K562 (cell line): ENCODE measurements at regions of chr4 and their contacts with region 1.

Region 1: GRCh38 chr4:139665690-139666529 is at the start of gene MGST2:
- DNase-seq: peak; percentile 67 to 91 (median 80)
- ATAC-seq: peak; percentile 85
- H3K4me3 ChIP-seq: peak within 1 kb of the TSS; percentile 44
- H3K27ac ChIP-seq: peak within 1 kb of the TSS; percentile 91
- H3K4me1 ChIP-seq: peaks cover 21 to 47% of the 10 kb centered on the region in 2 experiments
- H3K27me3 ChIP-seq: no peaks in the 10 kb centered on the region
- CTCF ChIP-seq: no peak
- EP300 ChIP-seq: peak; percentile 66; the same call in 1 of the 2 replicates
- POLR2A ChIP-seq: peak; percentile 78
- RAD21 ChIP-seq: no peak
- polyA plus RNA-seq, gene MGST2: 108 to 115 TPM

Region 2: DNA sequence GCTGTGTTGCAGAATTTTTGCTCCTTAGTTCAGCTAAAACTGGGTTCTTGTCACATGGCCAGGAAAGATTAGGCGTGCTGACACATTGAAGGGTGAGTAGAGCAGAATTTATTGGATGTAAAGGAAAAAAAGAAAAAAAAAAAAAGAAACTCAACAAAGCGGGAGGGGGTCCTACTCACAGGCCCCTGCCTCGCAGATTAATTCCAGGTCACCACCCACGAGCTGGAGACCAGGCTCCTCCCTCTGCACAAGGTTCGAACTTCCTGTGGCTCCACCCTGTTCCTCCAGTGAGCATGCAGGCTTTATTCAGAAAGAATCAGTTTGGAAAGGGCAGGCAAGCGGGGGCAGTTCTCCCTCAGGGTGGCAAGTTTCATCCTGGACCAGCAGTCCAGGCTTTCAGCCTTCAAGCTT is 16.8 kb after region 1 on chr4:
- CTCF ChIA-PET with region 1: no interaction called
- POLR2A ChIA-PET with region 1: interaction called, 4 read pairs
- in situ Hi-C with region 1: no loop called
- intact Hi-C with region 1: loop called (anchors 2 kb)
- DNase-seq: peak; percentile 33 to 66 (median 42)
- ATAC-seq: peak; percentile 87
- H3K4me3 ChIP-seq: no peak overlapping the region
- H3K27ac ChIP-seq: peak overlapping the region; percentile 51; the same call in 2 of the 3 replicates
- H3K4me1 ChIP-seq: peaks cover 4 to 40% of the 10 kb centered on the region in 2 experiments; a peak in 4 of 5 replicates
- H3K27me3 ChIP-seq: no peaks in the 10 kb centered on the region
- CTCF ChIP-seq: no peak
- EP300 ChIP-seq: no peak
- POLR2A ChIP-seq: no peak
- RAD21 ChIP-seq: no peak

Region 3: DNA sequence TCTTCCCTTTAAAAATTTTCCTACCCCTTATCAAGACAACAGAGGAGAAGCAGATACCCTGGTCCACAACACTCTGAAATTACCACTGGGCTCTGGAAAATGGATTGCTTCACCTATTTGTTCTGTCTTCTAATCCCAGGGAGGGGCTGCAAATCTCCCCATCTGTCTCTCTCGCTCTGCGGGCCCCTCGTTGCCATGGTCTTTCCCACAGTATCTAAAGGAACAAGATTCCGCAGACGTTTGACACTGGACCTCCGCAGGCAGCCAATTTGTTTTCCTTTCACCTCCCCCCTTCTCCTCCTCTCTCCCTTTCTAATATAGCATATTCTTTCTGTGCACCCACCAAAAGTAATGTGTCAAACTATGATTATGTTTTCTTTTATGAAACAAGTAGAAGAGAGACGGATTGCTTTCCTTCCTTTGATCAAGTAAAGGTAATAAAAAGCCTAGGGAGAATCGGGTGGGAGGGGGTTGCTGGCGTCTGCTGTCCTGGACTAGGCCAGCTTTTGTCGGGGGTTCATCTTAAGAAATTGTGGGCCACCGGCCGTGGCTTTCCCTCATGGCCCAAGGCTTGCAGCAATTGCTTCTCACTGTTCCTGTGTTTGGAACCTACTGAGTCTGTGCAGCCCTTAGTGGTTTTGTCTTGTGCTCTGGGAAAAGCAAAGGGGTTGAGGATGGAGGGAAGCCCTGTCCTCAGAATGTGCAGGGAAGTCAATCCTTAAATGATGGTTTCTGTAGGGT is 80.7 kb after region 1 on chr4:
- CTCF ChIA-PET with region 1: no interaction called
- POLR2A ChIA-PET with region 1: no interaction called
- in situ Hi-C with region 1: no loop called
- intact Hi-C with region 1: no loop called
- DNase-seq: no peak
- ATAC-seq: no peak
- H3K4me3 ChIP-seq: no peak overlapping the region
- H3K27ac ChIP-seq: no peak overlapping the region
- H3K4me1 ChIP-seq: no peaks in the 10 kb centered on the region
- H3K27me3 ChIP-seq: peaks cover 15 to 36% of the 10 kb centered on the region in 2 experiments; a peak in 4 of 5 replicates
- CTCF ChIP-seq: no peak
- EP300 ChIP-seq: no peak
- POLR2A ChIP-seq: no peak
- RAD21 ChIP-seq: no peak

Region 4: GRCh38 chr4:139761461-139761860 is 95.6 kb after region 1 on chr4:
- CTCF ChIA-PET with region 1: no interaction called
- POLR2A ChIA-PET with region 1: no interaction called
- in situ Hi-C with region 1: no loop called
- intact Hi-C with region 1: no loop called
- DNase-seq: peak; percentile 18 to 37 (median 24)
- ATAC-seq: peak; percentile 92
- H3K4me3 ChIP-seq: no peak overlapping the region
- H3K27ac ChIP-seq: no peak overlapping the region
- H3K4me1 ChIP-seq: no peaks in the 10 kb centered on the region
- H3K27me3 ChIP-seq: peaks cover 21 to 31% of the 10 kb centered on the region in 2 experiments; a peak in 4 of 5 replicates
- CTCF ChIP-seq: peak; percentile 44 to 88 (median 65); a peak in 5 of 6 replicates
- EP300 ChIP-seq: no peak
- POLR2A ChIP-seq: no peak
- RAD21 ChIP-seq: peak in 1 of 2 experiments; percentile 54; a peak in 2 of 4 replicates

Region 5: GRCh38 chr4:139933104-139933503 is 267.2 kb after region 1 on chr4:
- CTCF ChIA-PET with region 1: no interaction called
- POLR2A ChIA-PET with region 1: no interaction called
- in situ Hi-C with region 1: no loop called
- intact Hi-C with region 1: no loop called
- DNase-seq: peak in 1 of 4 experiments; percentile 3
- ATAC-seq: peak; percentile 66
- H3K4me3 ChIP-seq: no peak overlapping the region
- H3K27ac ChIP-seq: no peak overlapping the region
- H3K4me1 ChIP-seq: no peaks in the 10 kb centered on the region
- H3K27me3 ChIP-seq: peaks cover 8 to 25% of the 10 kb centered on the region in 2 experiments; a peak in 4 of 5 replicates
- CTCF ChIP-seq: no peak
- EP300 ChIP-seq: no peak
- POLR2A ChIP-seq: no peak
- RAD21 ChIP-seq: no peak

Region 6: DNA sequence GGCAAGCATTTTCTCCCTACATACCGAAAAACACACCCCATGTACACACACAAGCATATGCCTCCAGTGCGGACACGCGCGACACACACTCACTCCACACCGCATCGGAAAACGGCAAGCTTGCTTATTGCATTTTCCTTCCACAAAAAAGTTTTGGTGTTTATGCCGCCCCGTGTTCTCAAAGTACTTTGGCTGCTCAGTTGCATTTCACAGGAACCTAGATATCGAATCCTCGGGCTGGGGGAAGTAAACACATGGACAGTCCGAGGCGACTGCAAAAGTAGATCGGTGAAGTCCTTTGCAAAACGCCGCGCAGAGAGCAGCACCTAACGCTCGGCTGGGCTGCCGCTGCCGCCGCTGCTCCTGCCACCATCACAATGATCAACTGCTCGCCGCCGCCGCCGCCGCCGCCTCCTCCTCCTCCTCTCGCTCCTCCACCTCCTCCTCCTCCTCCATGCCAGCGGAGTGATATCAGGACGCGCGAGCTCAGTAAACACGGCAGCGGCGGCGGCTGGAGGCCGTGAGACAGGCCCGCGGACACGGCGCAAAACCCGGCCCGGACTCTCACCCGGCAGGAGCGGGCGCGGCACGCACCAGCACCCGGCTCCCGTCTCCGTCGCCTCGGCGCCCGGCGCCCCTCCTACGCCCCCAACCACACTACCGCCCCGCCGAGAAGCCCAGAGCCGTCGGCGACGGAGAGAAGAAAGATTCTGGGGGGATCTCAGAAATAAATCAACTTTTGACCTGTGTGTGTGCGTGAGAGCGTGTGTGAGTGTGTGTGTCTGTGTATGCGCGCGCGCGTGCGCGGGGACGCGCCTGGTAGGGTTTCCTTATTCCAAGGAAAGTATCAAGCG is 488.0 kb after region 1 on chr4 and contains the start of gene MAML3:
- CTCF ChIA-PET with region 1: no interaction called
- POLR2A ChIA-PET with region 1: no interaction called
- in situ Hi-C with region 1: no loop called
- intact Hi-C with region 1: loop called (anchors 5 kb)
- DNase-seq: peak; percentile 77 to 90 (median 80)
- ATAC-seq: peak; percentile 73
- H3K4me3 ChIP-seq: peak within 1 kb of the TSS; percentile 61
- H3K27ac ChIP-seq: peak within 1 kb of the TSS; percentile 41
- H3K4me1 ChIP-seq: peaks cover 0 to 33% of the 10 kb centered on the region in 2 experiments; a peak in 3 of 5 replicates
- H3K27me3 ChIP-seq: peaks cover 7 to 22% of the 10 kb centered on the region in 2 experiments; a peak in 3 of 5 replicates
- CTCF ChIP-seq: no peak
- EP300 ChIP-seq: no peak
- POLR2A ChIP-seq: peak; percentile 36; the same call in 1 of the 2 replicates
- RAD21 ChIP-seq: no peak
- polyA plus RNA-seq, gene MAML3: 0.01 to 0.06 TPM